Endothelial cell of umbilical vein (primary cell): ENCODE measurements at regions of chr3 and their contacts with region 1.

Region 1: DNA sequence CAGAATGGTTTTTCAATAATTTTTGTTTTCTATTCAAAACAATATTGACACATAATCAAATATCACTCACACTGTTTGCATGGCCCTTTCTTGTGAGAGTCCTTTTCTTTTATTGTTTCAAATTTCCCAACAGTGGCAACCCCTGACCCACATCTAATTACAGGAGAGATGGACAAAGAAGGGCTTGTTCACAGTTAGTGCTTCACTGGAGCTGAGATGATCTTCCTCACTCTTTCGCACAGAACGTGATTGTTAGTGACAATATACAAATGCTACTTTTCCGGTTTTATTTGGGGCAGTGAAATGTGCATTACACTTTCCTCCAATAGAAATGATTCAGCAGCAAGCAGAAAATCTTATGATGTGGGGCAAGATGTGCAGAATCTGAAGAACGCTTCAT is 38.6 kb upstream of the TTC14 start:
- DNase-seq: no peak
- H3K4me3 ChIP-seq: no peak overlapping the region
- H3K27ac ChIP-seq: no peak overlapping the region
- H3K4me1 ChIP-seq: no peaks in the 10 kb centered on the region
- H3K27me3 ChIP-seq: no peaks in the 10 kb centered on the region
- CTCF ChIP-seq: no peak
- POLR2A ChIP-seq: no peak

Region 2: DNA sequence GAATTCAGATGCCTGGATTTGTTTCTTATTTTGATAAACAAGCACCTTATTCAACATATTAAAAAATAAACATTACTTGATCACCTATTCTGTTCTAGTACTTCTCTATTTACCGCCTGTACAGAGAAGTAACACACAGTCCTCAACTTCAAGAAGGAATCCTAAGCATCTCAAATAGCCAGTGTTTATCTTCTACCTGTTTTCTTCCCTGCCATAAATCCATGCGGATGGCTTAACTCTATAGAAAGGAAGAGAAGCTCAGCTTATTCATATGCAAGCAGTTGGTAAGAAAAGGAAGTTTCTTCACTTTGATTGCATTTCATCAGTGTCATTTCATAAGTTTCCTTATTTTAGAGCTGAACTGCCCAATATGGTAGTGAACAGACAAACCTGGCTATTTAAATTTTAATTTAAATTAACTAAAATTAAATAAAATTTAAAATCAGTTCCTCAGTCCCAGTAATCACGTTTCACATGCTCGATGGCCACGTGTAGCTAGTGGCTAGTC is 316.7 kb before region 1 on chr3:
- CTCF ChIA-PET with region 1: no interaction called
- POLR2A ChIA-PET with region 1: no interaction called
- dilution Hi-C with region 1: no loop called
- intact Hi-C with region 1: loop called (anchors 10 kb)
- DNase-seq: no peak
- H3K4me3 ChIP-seq: no peak overlapping the region
- H3K27ac ChIP-seq: no peak overlapping the region
- H3K4me1 ChIP-seq: no peaks in the 10 kb centered on the region
- H3K27me3 ChIP-seq: no peaks in the 10 kb centered on the region
- CTCF ChIP-seq: no peak
- POLR2A ChIP-seq: no peak